ENCODE measurements at regions of chr19 and their contacts with region 1.

Region 1: DNA sequence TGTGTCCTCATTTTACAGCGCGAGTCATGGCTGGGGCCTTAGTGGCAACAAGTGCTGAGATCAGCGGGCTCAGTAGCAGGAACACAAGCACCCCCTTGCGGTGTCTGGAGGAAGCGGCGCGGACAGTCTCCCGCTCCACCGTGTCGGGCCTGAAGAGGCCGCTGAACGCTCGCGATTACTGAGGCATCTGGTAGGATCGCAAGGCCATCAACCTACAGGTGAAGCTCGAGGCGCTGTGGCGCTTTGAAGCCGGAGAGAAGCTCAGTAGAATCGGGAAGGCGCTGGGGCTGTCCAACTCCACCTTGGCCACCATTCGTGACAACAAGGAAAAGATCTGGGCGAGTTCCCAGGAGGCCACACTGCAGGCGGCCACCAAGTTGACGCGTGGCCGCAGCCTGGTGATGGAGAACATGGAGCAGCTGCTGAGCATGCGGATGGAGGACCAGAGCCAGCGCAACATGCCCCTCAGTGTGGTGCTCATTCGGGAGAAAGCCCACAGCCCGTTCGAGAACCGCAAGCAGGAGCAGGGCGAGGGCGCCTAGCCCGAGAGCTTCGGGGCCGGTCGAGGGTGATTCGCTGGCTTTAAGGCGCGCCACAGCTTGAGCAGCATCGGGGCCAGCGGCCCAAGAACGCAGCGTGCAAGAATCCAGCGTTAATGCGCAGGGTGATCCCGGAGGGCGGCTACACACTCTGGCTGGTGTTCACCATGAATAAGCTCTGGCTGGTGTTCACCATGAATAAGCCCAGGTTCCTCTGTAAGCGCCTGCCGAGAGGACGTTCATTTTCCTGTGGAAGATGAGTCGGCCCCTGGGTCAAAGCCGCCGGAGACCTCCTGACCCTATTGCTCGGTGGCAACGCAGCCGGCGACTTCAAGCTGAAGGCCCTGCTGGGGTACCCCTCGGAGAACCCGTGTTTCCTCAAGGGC is 8.4 kb upstream of the MZF1 start:
- DNase-seq: peak; percentile 95
- H3K4me3 Mint-ChIP-seq: no peak overlapping the region
- H3K27ac Mint-ChIP-seq: peak overlapping the region; percentile 82
- H3K4me1 Mint-ChIP-seq: peaks cover 24% of the 10 kb centered on the region
- H3K27me3 Mint-ChIP-seq: no peaks in the 10 kb centered on the region

Region 2: DNA sequence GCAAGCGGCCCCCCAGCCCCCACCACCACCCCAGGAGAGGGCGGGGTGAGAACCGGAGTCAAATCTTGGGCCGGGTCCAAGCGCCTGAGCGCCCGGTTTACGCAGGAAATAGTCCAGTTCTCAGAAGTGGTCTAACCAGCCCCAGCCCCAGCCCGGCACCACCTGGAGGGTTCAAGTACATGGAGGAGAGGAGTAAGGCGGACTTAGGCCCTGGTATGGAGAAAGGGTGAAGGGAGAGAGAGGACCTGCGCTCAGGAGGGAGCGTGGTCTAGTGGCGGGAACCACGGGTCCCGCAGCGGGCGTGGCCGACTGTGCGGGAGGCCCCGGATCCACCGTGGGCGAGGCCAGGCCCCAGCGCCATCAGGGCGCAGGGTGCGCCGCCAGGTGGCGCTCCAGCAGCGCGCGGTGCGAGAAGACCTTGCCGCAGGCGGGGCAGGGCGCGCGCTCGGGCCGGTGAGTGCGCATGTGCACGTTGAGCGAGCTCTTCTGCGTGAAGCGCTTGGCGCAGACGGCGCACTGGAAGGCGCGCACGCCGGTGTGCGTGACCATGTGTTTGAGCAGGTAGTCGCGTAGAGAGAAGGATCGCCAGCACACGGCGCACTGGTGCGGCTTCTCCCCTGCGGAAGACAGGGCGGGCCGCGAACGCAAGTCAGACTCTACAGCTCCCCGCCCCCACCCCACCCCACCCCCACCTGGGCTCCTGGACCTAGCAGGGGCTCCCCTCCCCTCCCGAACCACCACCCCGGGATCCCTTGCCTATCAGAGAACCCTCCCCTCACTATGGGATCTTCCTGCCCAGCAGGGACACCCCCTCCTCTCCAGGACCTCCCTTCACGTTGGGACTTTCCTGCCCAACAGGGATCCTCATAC is 67.6 kb before region 1 on chr19:
- CTCF ChIA-PET with region 1: interaction called, 109 read pairs
- DNase-seq: peak; percentile 97
- H3K4me3 Mint-ChIP-seq: peak overlapping the region; percentile 78
- H3K27ac Mint-ChIP-seq: peak overlapping the region; percentile 85
- H3K4me1 Mint-ChIP-seq: peaks cover 47% of the 10 kb centered on the region
- H3K27me3 Mint-ChIP-seq: no peaks in the 10 kb centered on the region

Region 3: GRCh38 chr19:58554494-58555368 is 26.8 kb before region 1 on chr19 and contains the start of gene CHMP2A:
- CTCF ChIA-PET with region 1: interaction called, 10 read pairs
- DNase-seq: peak; percentile 98
- H3K4me3 Mint-ChIP-seq: peak within 1 kb of the TSS; percentile 96
- H3K27ac Mint-ChIP-seq: peak within 1 kb of the TSS; percentile 94
- H3K4me1 Mint-ChIP-seq: peaks cover 54% of the 10 kb centered on the region
- H3K27me3 Mint-ChIP-seq: no peaks in the 10 kb centered on the region

Measured in activated naive CD4-positive, alpha-beta T cell treated with anti-CD3 and anti-CD28 coated beads, Interleukin-2, amount 10 ng/mL, durations not matched to agents 7 days and 5 days (primary cell).